H1 (cell line): ENCODE measurements at regions of chr6 and their contacts with region 1.

Region 1: GRCh38 chr6:131923356-131923755 is 27.8 kb downstream of the CCN2 start:
- DNase-seq: peak in 1 of 2 experiments; percentile 81
- H3K4me3 ChIP-seq: no peak overlapping the region
- H3K27ac ChIP-seq: no peak overlapping the region
- H3K4me1 ChIP-seq: no peaks in the 10 kb centered on the region
- H3K27me3 ChIP-seq: no peaks in the 10 kb centered on the region
- CTCF ChIP-seq: peak; percentile 83 to 95 (median 88)
- EP300 ChIP-seq: no peak
- POLR2A ChIP-seq: no peak
- RAD21 ChIP-seq: peak; percentile 84 to 89

Region 2: GRCh38 chr6:131694831-131695426 is 228.4 kb before region 1 on chr6:
- CTCF ChIA-PET with region 1: interaction called, 43 read pairs
- POLR2A ChIA-PET with region 1: interaction called, 4 read pairs
- DNase-seq: peak; percentile 38 to 63
- H3K4me3 ChIP-seq: no peak overlapping the region
- H3K27ac ChIP-seq: no peak overlapping the region
- H3K4me1 ChIP-seq: peaks cover 0 to 3% (median 1%) of the 10 kb centered on the region in 4 experiments; a peak in 2 of 7 replicates
- H3K27me3 ChIP-seq: no peaks in the 10 kb centered on the region
- CTCF ChIP-seq: peak; percentile 58 to 92 (median 87)
- EP300 ChIP-seq: no peak
- POLR2A ChIP-seq: no peak
- RAD21 ChIP-seq: peak; percentile 96 to 97

Region 3: DNA sequence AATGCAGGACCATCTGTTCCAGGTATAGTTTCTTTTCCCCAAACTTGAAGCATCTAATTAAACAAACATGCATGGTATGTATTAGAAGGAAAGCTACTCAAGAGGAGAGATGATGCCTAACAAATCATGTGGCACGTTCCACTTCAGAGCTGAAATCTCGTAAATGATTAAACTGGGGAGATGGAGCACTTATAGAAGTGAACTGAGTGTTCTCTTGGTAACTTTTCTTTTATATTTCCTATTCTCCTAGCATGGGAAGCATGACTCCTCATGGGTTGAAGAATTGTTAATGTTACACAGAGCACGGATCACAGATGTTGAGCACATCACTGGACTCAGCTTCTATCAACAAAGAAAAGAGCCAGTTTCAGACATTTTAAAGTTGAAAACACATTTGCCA is 33.3 kb before region 1 on chr6:
- CTCF ChIA-PET with region 1: no interaction called
- POLR2A ChIA-PET with region 1: no interaction called
- DNase-seq: no peak
- H3K4me3 ChIP-seq: no peak overlapping the region
- H3K27ac ChIP-seq: no peak overlapping the region
- H3K4me1 ChIP-seq: peaks cover 0 to 8% (median 3%) of the 10 kb centered on the region in 4 experiments; a peak in 3 of 7 replicates
- H3K27me3 ChIP-seq: no peaks in the 10 kb centered on the region
- CTCF ChIP-seq: no peak
- EP300 ChIP-seq: no peak
- POLR2A ChIP-seq: no peak
- RAD21 ChIP-seq: no peak

Region 4: GRCh38 chr6:131909408-131910218 is 13.7 kb before region 1 on chr6:
- CTCF ChIA-PET with region 1: interaction called, 72 read pairs
- POLR2A ChIA-PET with region 1: interaction called, 8 read pairs
- DNase-seq: peak in 1 of 2 experiments; percentile 89
- H3K4me3 ChIP-seq: no peak overlapping the region
- H3K27ac ChIP-seq: no peak overlapping the region
- H3K4me1 ChIP-seq: peaks cover 0 to 8% (median 5%) of the 10 kb centered on the region in 4 experiments; a peak in 3 of 7 replicates
- H3K27me3 ChIP-seq: no peaks in the 10 kb centered on the region
- CTCF ChIP-seq: peak in 2 of 3 experiments; percentile 74 to 75; a peak in 3 of 4 replicates
- EP300 ChIP-seq: no peak
- POLR2A ChIP-seq: peak in 1 of 2 experiments; percentile 70; a peak in 1 of 3 replicates
- RAD21 ChIP-seq: peak; percentile 67 to 72

Region 5: DNA sequence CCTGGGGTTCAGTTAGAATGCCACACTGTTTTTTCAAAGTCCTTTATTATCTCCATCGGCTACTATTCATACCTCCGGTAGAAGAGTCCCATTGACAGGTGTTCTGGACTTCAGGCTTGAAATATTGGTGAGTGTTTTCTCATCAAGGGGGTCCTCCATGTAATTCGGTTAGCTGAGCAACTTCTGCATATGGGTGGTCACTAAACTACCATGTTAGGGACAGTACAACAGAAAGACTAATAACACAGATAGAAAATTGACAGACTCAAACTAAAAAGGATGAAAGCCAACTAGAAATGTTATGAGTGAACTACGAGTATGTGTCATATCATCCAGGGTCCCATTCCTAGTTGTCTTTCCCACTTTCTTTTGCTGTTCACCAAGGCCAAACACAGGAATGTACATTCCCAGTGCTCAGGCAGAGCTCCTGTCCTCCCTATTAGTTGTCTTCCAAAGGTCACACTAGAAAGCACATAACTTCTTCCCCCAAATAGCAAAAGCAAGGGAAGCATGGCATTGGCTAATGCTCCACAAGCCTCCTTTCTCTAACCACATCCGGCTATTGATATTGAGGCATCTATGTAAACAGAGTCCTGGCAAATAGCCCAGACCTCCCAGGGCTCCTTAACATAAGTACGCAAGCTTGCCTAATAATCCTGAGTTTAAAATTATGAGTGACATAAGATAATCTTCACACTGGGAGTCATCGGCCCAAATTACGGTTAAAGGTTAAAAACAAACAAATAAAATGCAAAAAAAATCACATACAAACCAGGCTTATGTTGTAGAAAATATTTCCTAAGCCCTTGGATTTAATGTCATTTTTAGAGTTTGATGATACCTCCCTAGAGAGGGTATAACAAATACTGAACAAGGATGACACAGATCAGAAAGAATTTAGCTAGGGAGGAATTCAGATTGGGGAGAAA is 14.6 kb after region 1 on chr6:
- CTCF ChIA-PET with region 1: interaction called, 30 read pairs
- POLR2A ChIA-PET with region 1: interaction called, 5 read pairs
- DNase-seq: no peak
- H3K4me3 ChIP-seq: peak overlapping the region in 1 of 4 experiments; percentile 0; a peak in 1 of 8 replicates
- H3K27ac ChIP-seq: no peak overlapping the region
- H3K4me1 ChIP-seq: peaks cover 1 to 10% (median 6%) of the 10 kb centered on the region in 4 experiments; a peak in 4 of 7 replicates
- H3K27me3 ChIP-seq: no peaks in the 10 kb centered on the region
- CTCF ChIP-seq: no peak
- EP300 ChIP-seq: no peak
- POLR2A ChIP-seq: no peak
- RAD21 ChIP-seq: no peak

Region 6: DNA sequence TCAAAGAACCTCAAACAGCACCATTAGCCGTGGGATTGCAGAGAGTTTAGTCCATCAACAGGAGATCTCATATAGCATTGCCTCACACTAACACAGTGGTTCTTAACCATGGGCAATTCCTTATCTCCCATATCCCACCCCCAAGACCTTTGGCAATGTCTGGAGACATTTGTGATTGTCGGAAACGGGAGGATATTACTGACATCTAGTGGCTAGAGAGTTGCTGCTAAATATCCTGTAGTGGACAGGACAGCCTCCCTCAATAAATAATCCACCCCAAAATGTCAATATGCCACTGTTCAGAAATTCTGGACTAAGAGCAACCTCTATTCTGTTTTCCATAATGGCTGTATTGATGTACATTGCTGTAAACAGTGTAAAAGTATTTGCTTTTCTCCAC is 237.9 kb after region 1 on chr6:
- CTCF ChIA-PET with region 1: interaction called, 16 read pairs
- POLR2A ChIA-PET with region 1: interaction called, 3 read pairs
- DNase-seq: no peak
- H3K4me3 ChIP-seq: no peak overlapping the region
- H3K27ac ChIP-seq: no peak overlapping the region
- H3K4me1 ChIP-seq: no peaks in the 10 kb centered on the region
- H3K27me3 ChIP-seq: no peaks in the 10 kb centered on the region; a peak in 1 of 7 replicates
- CTCF ChIP-seq: peak in 2 of 3 experiments; percentile 73 to 79; a peak in 3 of 4 replicates
- EP300 ChIP-seq: no peak
- POLR2A ChIP-seq: no peak
- RAD21 ChIP-seq: peak; percentile 89 to 93

Region 7: GRCh38 chr6:132218059-132218696 is 294.8 kb after region 1 on chr6:
- CTCF ChIA-PET with region 1: interaction called, 13 read pairs
- POLR2A ChIA-PET with region 1: no interaction called
- DNase-seq: no peak
- H3K4me3 ChIP-seq: no peak overlapping the region
- H3K27ac ChIP-seq: no peak overlapping the region
- H3K4me1 ChIP-seq: no peaks in the 10 kb centered on the region
- H3K27me3 ChIP-seq: no peaks in the 10 kb centered on the region
- CTCF ChIP-seq: no peak; a peak in 1 of 4 replicates
- EP300 ChIP-seq: no peak
- POLR2A ChIP-seq: no peak
- RAD21 ChIP-seq: peak; percentile 44 to 49

Region 8: GRCh38 chr6:132247381-132248159 is 324.2 kb after region 1 on chr6:
- CTCF ChIA-PET with region 1: no interaction called
- POLR2A ChIA-PET with region 1: no interaction called
- DNase-seq: no peak
- H3K4me3 ChIP-seq: no peak overlapping the region
- H3K27ac ChIP-seq: no peak overlapping the region
- H3K4me1 ChIP-seq: peaks cover 0 to 4% (median 0%) of the 10 kb centered on the region in 4 experiments; a peak in 2 of 7 replicates
- H3K27me3 ChIP-seq: no peaks in the 10 kb centered on the region
- CTCF ChIP-seq: peak in 1 of 3 experiments; percentile 8; a peak in 1 of 4 replicates
- EP300 ChIP-seq: no peak
- POLR2A ChIP-seq: no peak
- RAD21 ChIP-seq: no peak

Region 9: DNA sequence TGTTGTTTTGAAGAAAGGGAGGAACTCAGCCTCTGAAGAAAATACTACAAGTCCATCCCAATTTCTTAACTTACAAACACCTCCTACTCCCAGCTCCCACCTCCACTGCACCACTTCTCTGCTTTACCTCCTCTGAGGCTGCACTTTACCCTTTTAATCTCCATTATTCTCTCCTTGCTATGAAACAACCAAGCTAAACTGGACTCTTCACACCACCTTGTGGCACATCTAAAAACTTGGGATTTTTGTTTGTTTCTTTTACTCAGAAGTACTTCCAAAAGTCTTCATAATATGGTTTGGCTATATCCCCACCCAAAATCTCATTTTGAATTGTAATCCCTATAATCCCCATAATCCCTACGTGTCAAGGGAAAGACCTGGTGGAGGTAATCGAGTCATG is 335.7 kb after region 1 on chr6:
- CTCF ChIA-PET with region 1: interaction called, 16 read pairs
- POLR2A ChIA-PET with region 1: no interaction called
- DNase-seq: no peak
- H3K4me3 ChIP-seq: no peak overlapping the region
- H3K27ac ChIP-seq: no peak overlapping the region
- H3K4me1 ChIP-seq: no peaks in the 10 kb centered on the region
- H3K27me3 ChIP-seq: no peaks in the 10 kb centered on the region
- CTCF ChIP-seq: peak in 2 of 3 experiments; percentile 27 to 33; a peak in 2 of 4 replicates
- EP300 ChIP-seq: no peak
- POLR2A ChIP-seq: no peak
- RAD21 ChIP-seq: peak; percentile 48 to 59